ENCODE measurements at regions of chr7 and their contacts with region 1.

Region 1: DNA sequence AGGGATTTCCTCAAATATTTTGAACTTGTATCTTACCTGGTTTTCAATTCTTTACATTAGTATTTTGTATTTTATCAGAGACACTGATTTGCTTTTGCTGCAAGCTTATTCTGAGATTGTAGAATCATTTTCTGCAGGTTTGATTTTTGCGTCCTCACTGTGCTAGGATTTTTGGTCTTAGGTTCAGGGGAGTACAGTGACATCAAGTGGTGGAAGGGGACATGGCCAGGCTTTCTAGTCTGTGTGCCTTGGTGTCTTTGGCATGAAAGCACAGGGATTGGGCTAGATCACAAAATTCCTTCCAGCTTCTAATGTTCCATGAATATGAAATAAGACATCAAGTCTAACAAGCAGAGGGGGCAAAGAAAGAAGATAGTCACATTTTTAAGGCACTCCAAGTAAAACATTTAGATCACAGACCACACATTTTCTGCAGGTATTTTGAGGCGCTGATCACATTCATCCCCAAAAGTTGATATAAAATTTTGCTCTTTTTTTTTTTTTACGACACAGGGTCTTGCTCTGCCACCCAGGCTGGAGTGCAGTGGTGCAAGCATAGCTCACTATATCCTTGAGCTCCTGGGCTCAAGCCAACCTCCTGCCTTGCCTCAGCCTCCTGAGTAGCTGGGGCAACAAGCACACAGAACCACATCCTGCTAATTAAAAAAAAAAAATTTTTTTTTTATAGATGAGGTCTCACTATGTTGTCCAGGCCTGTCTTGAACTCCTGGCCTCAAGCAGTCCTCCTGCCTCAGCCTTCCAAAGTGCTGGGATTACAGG is 124.4 kb downstream of the PON1 start:
- DNase-seq: peak; percentile 60
- ATAC-seq: peak; percentile 87
- H3K4me3 ChIP-seq: no peak overlapping the region
- H3K27ac ChIP-seq: no peak overlapping the region
- H3K4me1 ChIP-seq: no peaks in the 10 kb centered on the region
- H3K27me3 ChIP-seq: no peaks in the 10 kb centered on the region
- CTCF ChIP-seq: peak; percentile 81

Region 2: DNA sequence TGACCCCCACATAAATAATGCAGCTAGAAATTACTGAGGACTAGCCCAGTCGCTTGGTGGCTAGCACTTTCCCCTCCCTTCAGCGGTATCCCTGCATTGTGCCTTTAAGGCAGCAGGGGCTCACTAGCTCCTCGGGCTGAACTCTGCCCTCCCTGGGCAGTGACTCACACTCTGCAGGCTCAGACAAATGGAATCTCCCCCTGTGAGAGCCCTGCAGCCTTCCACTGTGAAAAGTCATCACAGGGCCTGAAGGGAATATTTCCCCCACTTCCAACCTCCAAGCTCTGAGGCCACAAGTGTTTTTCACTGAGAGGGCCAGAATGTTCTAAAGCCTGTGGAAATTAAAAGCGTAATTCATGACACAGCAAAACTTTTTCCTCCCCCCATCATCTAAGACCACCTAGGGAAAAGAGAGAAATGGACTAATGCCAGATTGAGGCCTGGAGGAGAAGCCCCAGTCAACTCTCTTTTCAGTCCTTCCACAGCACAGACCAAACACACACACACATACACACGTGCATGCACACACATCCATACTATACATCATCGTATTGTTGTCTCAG is 898.9 kb before region 1 on chr7:
- CTCF ChIA-PET with region 1: no interaction called
- POLR2A ChIA-PET with region 1: no interaction called
- intact Hi-C with region 1: no loop called
- DNase-seq: peak; percentile 91
- ATAC-seq: peak; percentile 98
- H3K4me3 ChIP-seq: peak overlapping the region; percentile 46; the same call in 1 of the 2 replicates
- H3K27ac ChIP-seq: peak overlapping the region; percentile 95
- H3K4me1 ChIP-seq: peaks cover 49% of the 10 kb centered on the region
- H3K27me3 ChIP-seq: no peaks in the 10 kb centered on the region
- CTCF ChIP-seq: no peak

Region 3: DNA sequence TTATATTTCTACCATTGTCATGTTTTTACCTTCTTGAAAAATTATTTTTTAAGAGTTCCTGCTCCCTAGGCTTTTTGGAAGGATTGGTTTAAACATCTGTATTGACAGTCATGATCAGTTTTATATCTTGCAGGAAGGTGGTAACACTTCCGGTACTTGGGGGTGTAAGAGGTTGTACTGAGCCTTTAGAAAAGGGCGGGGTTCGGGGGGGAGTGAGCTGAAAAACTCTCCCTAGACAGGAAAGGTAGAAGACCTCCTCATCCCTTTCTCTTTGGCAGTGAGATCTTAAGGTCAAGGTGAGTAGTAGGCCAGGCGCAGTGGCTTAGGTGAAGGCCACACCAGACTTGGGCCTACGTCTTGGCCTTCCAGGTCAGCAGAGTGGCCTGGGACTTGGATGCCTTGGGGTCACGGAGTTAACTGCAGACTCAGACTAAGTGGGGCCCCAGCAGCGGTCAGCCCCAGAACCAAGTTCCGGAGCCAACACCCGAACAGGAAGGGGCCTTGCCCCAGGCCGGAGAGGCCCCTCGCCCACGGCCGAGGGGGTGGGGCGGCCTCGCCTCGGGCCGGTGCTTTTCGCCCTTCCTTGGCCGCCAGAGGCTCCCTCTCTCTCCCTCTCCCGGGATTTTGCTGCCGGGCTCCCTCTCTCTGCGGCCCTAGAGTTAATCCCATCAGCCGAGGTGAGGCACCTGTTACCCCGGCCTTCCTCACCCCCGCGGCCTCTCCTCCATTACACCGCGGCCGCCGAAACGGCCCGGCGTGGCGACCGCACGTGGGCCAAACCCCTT is 292.8 kb before region 1 on chr7 and contains the start of gene PPP1R9A:
- CTCF ChIA-PET with region 1: no interaction called
- POLR2A ChIA-PET with region 1: no interaction called
- intact Hi-C with region 1: loop called (anchors 2 kb)
- DNase-seq: peak; percentile 65
- ATAC-seq: peak; percentile 80
- H3K4me3 ChIP-seq: peak within 1 kb of the TSS; percentile 95
- H3K27ac ChIP-seq: no peak within 1 kb of the TSS
- H3K4me1 ChIP-seq: peaks cover 10% of the 10 kb centered on the region
- H3K27me3 ChIP-seq: no peaks in the 10 kb centered on the region
- CTCF ChIP-seq: peak; percentile 53
- total RNA-seq, gene PPP1R9A: 5.9 and 9.5 TPM in 2 replicates

Region 4: GRCh38 chr7:95045236-95045923 is 154.6 kb before region 1 on chr7:
- CTCF ChIA-PET with region 1: no interaction called
- POLR2A ChIA-PET with region 1: no interaction called
- intact Hi-C with region 1: loop called (anchors 10 kb)
- DNase-seq: peak; percentile 66
- ATAC-seq: peak; percentile 99
- H3K4me3 ChIP-seq: no peak overlapping the region
- H3K27ac ChIP-seq: no peak overlapping the region
- H3K4me1 ChIP-seq: no peaks in the 10 kb centered on the region
- H3K27me3 ChIP-seq: no peaks in the 10 kb centered on the region
- CTCF ChIP-seq: peak; percentile 74

Region 5: DNA sequence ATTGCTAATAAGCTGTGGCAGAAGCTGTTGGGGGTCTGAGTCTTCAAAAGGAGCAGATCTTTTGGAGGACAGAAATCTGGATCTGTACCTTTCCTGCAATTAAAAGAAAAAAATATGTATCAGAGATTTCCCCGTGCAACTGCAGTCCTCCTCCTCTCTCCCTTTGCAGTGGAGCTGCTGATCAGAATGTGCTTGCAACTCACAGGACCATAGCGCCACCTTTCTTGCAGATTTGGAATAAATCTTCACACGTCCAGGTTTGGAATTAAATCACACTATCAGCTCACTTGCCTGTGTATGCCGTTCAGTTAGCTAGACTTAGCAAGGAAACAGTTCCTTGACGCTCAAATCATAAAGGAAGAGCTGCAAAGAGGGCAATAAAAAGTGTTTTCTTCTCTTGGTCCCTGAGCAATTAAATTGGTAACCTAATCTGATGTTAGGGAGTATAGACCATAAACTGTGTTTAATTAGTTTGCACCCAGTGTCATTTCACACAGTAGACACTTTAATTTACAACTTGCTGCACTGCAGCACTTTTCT is 46.9 kb after region 1 on chr7:
- CTCF ChIA-PET with region 1: no interaction called
- POLR2A ChIA-PET with region 1: no interaction called
- intact Hi-C with region 1: loop called (anchors 2 kb)
- DNase-seq: peak; percentile 73
- ATAC-seq: peak; percentile 86
- H3K4me3 ChIP-seq: no peak overlapping the region
- H3K27ac ChIP-seq: no peak overlapping the region
- H3K4me1 ChIP-seq: peaks cover 4% of the 10 kb centered on the region; the same call in 1 of the 2 replicates
- H3K27me3 ChIP-seq: no peaks in the 10 kb centered on the region
- CTCF ChIP-seq: peak; percentile 85